ENCODE measurements at regions of chr17 and their contacts with region 1.

Region 1: DNA sequence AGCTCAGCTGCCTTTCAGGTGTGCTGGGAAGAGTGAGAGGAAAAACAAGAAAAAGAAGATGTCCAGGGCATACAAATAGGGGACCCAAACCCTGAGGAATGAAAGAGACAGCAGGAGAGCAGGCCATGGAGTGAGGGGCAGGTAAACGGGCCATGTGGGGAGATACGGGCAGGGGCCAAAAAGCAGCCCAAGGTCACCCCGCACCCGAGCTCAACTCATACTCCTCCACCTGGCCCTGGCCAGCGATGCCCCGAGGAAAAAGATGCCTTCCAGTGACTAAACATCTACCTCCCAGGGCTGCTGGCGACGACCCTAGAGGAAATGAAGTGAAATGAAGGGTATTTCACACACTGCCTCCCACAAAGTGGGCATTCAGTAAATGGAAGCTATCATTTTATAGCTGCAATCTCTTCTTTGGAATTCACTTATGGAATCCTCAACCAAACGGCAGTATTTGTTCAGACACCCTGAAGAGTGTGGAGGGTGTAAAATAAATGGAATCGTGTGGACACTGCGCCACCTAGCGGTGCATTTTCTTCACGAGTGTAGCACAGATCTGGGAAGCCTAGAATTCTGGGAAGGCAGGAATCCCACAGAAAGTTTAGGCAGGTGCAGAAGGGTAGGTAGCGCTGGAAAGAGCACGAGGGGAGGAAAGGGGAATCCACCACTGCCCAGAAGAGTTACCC is 14.9 kb downstream of the ELAC2 start:
- DNase-seq: no peak
- H3K4me3 ChIP-seq: no peak overlapping the region
- H3K27me3 ChIP-seq: no peaks in the 10 kb centered on the region
- CTCF ChIP-seq: peak; percentile 76

Region 2: GRCh38 chr17:12180644-12181261 is 822.2 kb before region 1 on chr17:
- CTCF ChIA-PET with region 1: interaction called, 29 read pairs
- POLR2A ChIA-PET with region 1: no interaction called
- DNase-seq: no peak
- H3K4me3 ChIP-seq: no peak overlapping the region
- H3K27me3 ChIP-seq: no peaks in the 10 kb centered on the region
- CTCF ChIP-seq: peak; percentile 69

Region 3: DNA sequence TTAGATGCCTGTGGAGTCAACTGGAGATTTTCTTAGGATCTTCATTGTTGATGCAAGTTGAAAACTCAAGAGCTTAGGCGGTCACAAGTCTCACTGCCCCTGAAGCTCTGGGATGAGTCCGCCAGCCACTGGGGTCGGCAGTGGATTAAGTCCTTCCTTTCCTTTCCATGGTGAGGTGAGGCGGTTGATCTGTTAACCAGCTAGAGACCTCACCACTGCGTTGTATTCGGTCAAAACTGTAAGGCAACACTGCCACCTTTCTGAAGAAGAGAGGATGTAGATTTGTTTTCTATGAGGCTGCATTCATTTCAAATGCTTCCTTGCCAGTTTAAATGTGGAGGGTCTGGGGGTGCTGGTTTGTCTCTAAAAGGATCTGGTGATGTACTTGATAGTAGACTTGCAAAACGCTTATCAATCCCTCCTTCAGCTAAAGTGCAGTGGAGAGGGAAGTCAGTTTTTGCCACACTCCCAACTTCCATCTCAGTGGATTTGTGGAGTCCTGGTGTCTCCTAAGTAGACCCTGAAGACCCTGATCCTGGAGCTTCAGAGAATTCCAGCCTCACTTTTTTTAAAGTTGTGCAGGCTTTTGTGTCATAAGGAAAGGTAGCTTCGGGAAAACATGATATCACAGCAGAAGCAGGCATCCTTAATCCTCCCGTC is 335.5 kb before region 1 on chr17:
- CTCF ChIA-PET with region 1: interaction called, 10 read pairs
- POLR2A ChIA-PET with region 1: no interaction called
- DNase-seq: no peak
- H3K4me3 ChIP-seq: peak overlapping the region; percentile 17; the same call in 1 of the 2 replicates
- H3K27me3 ChIP-seq: no peaks in the 10 kb centered on the region
- CTCF ChIP-seq: peak; percentile 55

Region 4: DNA sequence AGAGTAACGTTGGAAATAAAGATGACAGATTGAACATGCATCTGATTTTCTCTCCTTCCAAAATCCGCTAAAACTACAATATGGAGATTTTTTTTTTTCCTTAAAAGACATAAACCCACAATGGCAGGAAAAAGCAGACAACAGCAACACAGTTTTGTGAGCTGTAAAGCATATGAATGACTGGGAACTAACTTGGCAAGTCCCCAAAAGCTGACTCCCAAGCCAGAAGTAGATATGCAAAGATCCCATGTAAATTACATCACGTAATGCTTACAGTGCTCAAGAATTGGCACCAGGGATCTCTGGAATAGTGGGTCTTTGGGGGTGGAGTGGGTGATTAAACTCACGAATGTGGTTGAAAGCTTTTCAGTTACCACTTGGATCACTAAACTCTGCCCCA is 91.7 kb before region 1 on chr17:
- CTCF ChIA-PET with region 1: no interaction called
- POLR2A ChIA-PET with region 1: no interaction called
- DNase-seq: no peak
- H3K4me3 ChIP-seq: no peak overlapping the region
- H3K27me3 ChIP-seq: no peaks in the 10 kb centered on the region
- CTCF ChIP-seq: no peak

Region 5: DNA sequence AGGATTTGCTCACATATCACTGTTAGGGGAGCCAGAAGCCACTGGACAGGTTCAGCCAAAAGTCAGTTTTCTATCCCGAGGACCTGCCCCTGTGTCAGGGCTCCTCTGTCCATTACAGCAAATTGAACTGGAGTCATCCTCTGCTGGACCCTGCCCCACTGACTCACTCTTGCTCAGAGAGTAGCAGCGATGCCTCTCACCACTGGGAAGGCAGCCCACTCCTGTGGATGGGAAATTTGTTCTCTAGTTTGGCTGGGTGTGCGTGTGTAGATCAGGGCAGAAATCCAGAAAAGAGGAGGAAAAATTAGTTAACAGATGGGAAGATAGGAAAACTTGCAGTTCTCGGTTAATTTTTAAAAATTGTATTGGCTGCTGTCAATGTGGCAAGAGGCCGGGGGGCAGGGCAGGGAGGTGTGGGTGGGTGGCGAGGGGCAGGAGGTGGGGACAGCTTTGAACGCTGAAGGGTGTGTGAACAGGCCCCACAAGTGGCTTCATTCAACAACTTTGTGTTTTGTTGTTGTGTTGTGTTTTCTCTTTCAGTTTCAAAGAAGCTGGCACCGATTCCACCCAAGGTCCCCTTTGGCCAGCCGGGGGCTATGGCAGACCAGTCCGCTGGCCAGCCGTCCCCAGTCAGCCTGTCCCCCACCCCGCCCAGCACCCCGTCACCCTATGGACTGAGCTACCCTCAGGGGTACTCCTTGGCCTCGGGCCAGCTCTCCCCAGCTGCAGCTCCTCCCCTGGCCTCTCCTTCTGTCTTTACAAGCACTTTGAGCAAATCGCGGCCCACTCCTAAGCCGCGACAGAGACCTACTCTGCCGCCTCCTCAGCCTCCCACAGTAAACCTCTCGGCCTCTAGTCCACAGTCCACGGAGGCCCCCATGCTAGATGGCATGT is 18.7 kb before region 1 on chr17:
- CTCF ChIA-PET with region 1: interaction called, 28 read pairs
- POLR2A ChIA-PET with region 1: no interaction called
- DNase-seq: peak; percentile 22
- H3K4me3 ChIP-seq: no peak overlapping the region
- H3K27me3 ChIP-seq: no peaks in the 10 kb centered on the region
- CTCF ChIP-seq: no peak

Region 6: DNA sequence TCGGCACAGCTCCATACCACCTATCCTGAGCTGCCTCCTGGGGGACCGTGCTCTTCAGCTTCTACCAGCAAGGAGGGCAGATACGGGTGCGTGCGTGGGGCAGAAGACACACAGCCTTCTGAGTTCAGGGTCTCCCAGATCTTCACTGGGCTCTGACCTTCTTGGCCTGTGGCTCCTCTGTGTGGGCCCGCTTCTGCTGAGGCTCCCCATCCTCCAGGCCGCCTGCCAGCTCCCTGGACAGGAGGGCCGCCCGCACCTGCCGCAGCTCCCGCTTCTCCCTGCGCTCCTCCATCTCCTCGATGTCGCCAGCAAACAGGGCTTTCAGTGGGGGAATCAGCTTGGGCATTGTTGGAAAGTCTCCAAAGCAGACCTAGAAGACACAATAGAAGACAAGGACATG is 10.2 kb before region 1 on chr17:
- CTCF ChIA-PET with region 1: interaction called, 28 read pairs
- POLR2A ChIA-PET with region 1: no interaction called
- DNase-seq: no peak
- H3K4me3 ChIP-seq: no peak overlapping the region
- H3K27me3 ChIP-seq: no peaks in the 10 kb centered on the region
- CTCF ChIP-seq: no peak

Region 7: GRCh38 chr17:13017659-13018459 is 14.9 kb after region 1 on chr17 and contains the start of gene ELAC2:
- CTCF ChIA-PET with region 1: interaction called, 17 read pairs
- POLR2A ChIA-PET with region 1: no interaction called
- DNase-seq: peak; percentile 88
- H3K4me3 ChIP-seq: peak within 1 kb of the TSS; percentile 79
- H3K27me3 ChIP-seq: no peaks in the 10 kb centered on the region
- CTCF ChIP-seq: no peak
- polyA plus RNA-seq, gene ELAC2: 48.4 and 71.0 TPM in 2 replicates

Region 8: GRCh38 chr17:13096291-13096690 is 93.4 kb after region 1 on chr17:
- CTCF ChIA-PET with region 1: no interaction called
- POLR2A ChIA-PET with region 1: no interaction called
- DNase-seq: no peak
- H3K4me3 ChIP-seq: no peak overlapping the region
- H3K27me3 ChIP-seq: no peaks in the 10 kb centered on the region
- CTCF ChIP-seq: no peak